ENCODE measurements at regions of chr12 and their contacts with region 1.

Region 1: GRCh38 chr12:68831272-68831671 is 23.3 kb downstream of the MDM2 start:
- DNase-seq: no peak
- ATAC-seq: peak; percentile 76
- H3K4me3 Mint-ChIP-seq: no peak overlapping the region
- H3K27ac Mint-ChIP-seq: peak overlapping the region; percentile 85
- H3K4me1 Mint-ChIP-seq: peaks cover 24% of the 10 kb centered on the region
- H3K27me3 Mint-ChIP-seq: no peaks in the 10 kb centered on the region
- CTCF ChIP-seq: no peak

Region 2: DNA sequence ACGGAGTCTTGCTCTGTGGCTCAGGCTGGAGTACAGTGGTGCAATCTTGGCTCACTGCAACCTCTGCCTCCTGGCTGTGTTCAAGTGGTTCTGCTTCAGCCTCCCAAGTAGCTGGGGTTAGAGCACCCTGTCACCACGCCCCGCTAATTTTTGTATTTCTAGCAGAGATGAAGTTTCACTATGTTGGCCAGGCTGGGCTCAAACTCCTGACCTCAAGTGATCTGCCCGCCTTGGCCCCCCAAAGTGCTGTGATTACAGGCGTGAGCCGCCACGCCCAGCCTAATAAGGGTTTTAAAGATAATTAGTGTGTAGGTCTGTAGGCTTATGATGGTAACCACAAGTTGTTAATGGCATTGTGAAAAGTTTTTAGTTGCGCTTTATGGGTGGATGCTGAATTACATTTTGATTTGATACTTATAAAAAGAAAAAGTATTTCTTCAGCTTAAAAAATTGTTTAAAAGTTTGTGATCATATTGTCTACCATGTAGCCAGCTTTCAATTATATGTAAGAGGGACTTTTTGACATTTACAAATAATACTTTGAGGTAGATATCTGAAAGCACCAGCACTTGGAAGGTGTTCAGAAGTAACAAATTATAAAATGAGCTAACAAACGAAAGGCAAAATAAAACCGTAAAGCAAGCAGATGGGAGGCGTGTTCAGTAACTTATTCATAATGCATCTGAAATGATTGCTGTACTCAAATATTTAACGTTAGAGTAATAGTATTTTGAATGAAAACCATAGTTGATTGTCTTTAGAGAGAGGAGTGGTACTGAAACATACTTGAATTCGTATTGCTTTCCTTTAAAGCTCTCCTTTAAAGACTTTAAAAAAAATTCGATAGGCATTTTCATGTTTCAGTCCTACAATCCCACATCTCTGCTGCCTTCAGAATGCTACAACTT is 13.8 kb after region 1 on chr12:
- CTCF ChIA-PET with region 1: interaction called, 15 read pairs
- POLR2A ChIA-PET with region 1: interaction called, 3 read pairs
- DNase-seq: no peak
- ATAC-seq: no peak
- H3K4me3 Mint-ChIP-seq: no peak overlapping the region
- H3K27ac Mint-ChIP-seq: no peak overlapping the region
- H3K4me1 Mint-ChIP-seq: no peaks in the 10 kb centered on the region
- H3K27me3 Mint-ChIP-seq: no peaks in the 10 kb centered on the region
- CTCF ChIP-seq: no peak

Measured in WTC11 (cell line).